Sciatic nerve (tissue), 2 donors: ENCODE measurements at regions of chr3 and their contacts with region 1.

Region 1: GRCh38 chr3:120661118-120661935 is 20.7 kb downstream of the HGD start:
- DNase-seq: no peak
- ATAC-seq: no peak

Region 2: DNA sequence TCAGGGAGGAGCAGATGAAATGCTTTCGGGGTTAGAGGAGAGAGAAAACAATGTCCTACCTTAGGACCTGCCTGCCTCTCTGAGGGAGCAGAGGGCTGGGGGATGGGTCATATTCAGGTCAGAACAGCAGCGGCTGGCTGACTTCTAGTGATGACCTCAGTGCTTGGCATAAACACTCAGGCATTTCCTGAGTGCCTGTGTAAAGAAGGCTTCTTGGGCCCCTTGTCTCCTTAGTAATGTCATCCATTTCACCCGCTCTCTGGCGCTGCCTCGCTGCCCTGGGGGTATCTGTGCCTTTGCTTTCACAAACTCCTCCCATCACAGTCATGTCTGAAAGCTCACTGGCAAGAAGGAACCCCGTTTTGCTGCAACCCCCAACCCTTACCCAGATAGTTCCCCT is 484.2 kb before region 1 on chr3:
- intact Hi-C with region 1: no loop called
- DNase-seq: no peak
- ATAC-seq: peak; percentile 79

Region 3: GRCh38 chr3:121951291-121951919 is 1290.1 kb after region 1 on chr3:
- intact Hi-C with region 1: loop called (anchors 5 kb)
- DNase-seq: no peak
- ATAC-seq: no peak